MCF 10A (cell line): ENCODE measurements at regions of chr3 and their contacts with region 1.

Region 1: GRCh38 chr3:193665370-193665989 is 72.5 kb downstream of the OPA1 start:
- DNase-seq: peak; percentile 40
- H3K4me3 Mint-ChIP-seq: no peak overlapping the region
- H3K27ac Mint-ChIP-seq: no peak overlapping the region
- H3K4me1 Mint-ChIP-seq: no peaks in the 10 kb centered on the region
- H3K27me3 Mint-ChIP-seq: no peaks in the 10 kb centered on the region
- CTCF ChIP-seq: peak; percentile 36

Region 2: DNA sequence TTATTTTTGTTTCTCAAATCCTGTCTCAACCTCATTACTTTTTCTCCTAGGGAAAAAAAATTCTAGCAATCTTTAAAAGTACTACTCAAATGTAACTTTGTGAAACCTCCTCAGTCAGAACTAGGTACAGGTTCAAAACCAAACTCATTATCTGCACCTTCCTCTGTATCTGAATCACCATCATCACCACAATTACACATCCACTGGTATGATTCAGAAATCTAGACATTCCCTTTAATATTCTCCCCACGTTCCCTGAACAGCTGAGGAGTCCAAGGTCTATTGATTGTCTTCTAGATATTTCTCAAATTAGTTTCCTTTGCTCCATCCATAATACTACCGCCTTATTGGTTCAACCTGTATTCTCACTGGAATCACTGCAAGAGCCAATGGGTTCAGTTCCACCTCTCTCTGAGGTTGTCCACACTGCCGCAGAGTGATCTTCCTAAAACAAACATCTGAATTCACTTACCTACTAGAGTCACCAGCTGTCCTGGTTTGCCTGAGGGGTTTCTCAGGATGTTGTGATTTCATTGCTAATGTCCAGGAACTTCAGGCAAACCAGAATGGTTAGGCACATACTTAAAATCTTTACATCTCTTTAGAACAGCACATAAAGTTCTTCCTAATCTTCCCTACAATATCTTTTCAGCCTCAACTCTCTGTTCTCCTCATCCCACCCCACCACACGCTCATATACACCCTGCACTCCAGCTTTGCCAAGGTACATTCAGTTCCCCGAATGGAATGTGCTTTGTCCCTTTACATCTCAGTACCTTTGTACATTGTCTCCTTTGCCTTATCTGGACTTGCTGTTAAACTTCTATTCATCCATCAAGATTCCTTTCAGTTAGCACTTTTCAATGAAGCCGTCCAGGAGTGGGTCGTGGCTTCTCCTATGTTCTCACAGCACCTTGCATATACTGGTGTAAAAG is 135.0 kb before region 1 on chr3:
- CTCF ChIA-PET with region 1: no interaction called
- POLR2A ChIA-PET with region 1: no interaction called
- intact Hi-C with region 1: no loop called
- DNase-seq: no peak
- H3K4me3 Mint-ChIP-seq: no peak overlapping the region
- H3K27ac Mint-ChIP-seq: no peak overlapping the region
- H3K4me1 Mint-ChIP-seq: no peaks in the 10 kb centered on the region
- H3K27me3 Mint-ChIP-seq: peaks cover 35% of the 10 kb centered on the region
- CTCF ChIP-seq: no peak

Region 3: GRCh38 chr3:194404365-194405140 is 739.1 kb after region 1 on chr3:
- CTCF ChIA-PET with region 1: interaction called, 13 read pairs
- POLR2A ChIA-PET with region 1: interaction called, 6 read pairs
- intact Hi-C with region 1: loop called (anchors 1 kb)
- DNase-seq: peak; percentile 60
- H3K4me3 Mint-ChIP-seq: no peak overlapping the region
- H3K27ac Mint-ChIP-seq: no peak overlapping the region
- H3K4me1 Mint-ChIP-seq: no peaks in the 10 kb centered on the region
- H3K27me3 Mint-ChIP-seq: no peaks in the 10 kb centered on the region
- CTCF ChIP-seq: peak; percentile 72